ENCODE measurements at regions of chr4 and their contacts with region 1.

Region 1: GRCh38 chr4:108261026-108261425 is 92.3 kb upstream of the LEF1 start:
- DNase-seq: no peak
- H3K4me3 ChIP-seq: no peak overlapping the region
- H3K27ac ChIP-seq: no peak overlapping the region
- H3K27me3 ChIP-seq: peaks cover 3% of the 10 kb centered on the region
- CTCF ChIP-seq: no peak

Region 2: DNA sequence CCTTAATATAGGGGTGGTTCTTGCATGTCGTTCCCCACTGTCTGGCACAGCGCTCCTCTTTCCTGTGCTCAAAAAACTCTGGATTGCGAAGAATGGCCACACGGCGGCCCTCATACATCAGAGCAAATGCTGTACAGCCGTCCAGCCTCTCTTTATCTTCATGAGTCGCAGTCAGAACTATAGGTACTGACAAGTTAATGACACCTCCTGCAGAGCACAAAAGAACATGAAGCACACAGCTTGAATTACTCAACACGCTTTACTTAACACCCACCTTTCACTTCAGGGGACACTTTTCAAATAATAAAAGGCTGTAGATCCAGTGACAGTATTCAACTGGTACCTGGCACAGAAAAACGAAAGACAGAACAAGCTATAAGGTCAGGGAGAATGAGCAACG is 606.3 kb before region 1 on chr4:
- CTCF ChIA-PET with region 1: no interaction called
- POLR2A ChIA-PET with region 1: no interaction called
- DNase-seq: no peak
- H3K4me3 ChIP-seq: no peak overlapping the region
- H3K27ac ChIP-seq: no peak overlapping the region
- H3K27me3 ChIP-seq: no peaks in the 10 kb centered on the region
- CTCF ChIP-seq: no peak

Region 3: GRCh38 chr4:108193886-108194672 is 66.9 kb before region 1 on chr4:
- CTCF ChIA-PET with region 1: no interaction called
- POLR2A ChIA-PET with region 1: no interaction called
- DNase-seq: no peak
- H3K4me3 ChIP-seq: no peak overlapping the region
- H3K27ac ChIP-seq: no peak overlapping the region
- H3K27me3 ChIP-seq: no peaks in the 10 kb centered on the region
- CTCF ChIP-seq: no peak

Region 4: GRCh38 chr4:109026588-109026987 is 765.6 kb after region 1 on chr4:
- CTCF ChIA-PET with region 1: interaction called, 11 read pairs
- POLR2A ChIA-PET with region 1: no interaction called
- DNase-seq: peak; percentile 10
- H3K4me3 ChIP-seq: no peak overlapping the region
- H3K27ac ChIP-seq: no peak overlapping the region
- H3K27me3 ChIP-seq: no peaks in the 10 kb centered on the region
- CTCF ChIP-seq: no peak

Measured in AG04450 (cell line).